ENCODE measurements at regions of chr2 and their contacts with region 1.

Region 1: GRCh38 chr2:21042958-21043743 is 722 bp downstream of the APOB start:
- DNase-seq: peak; percentile 68
- ATAC-seq: peak; percentile 73
- H3K4me3 Mint-ChIP-seq: no peak overlapping the region
- H3K27ac Mint-ChIP-seq: no peak overlapping the region
- H3K4me1 Mint-ChIP-seq: peaks cover 3% of the 10 kb centered on the region
- H3K27me3 Mint-ChIP-seq: peaks cover 14% of the 10 kb centered on the region
- CTCF ChIP-seq: peak; percentile 96

Region 2: DNA sequence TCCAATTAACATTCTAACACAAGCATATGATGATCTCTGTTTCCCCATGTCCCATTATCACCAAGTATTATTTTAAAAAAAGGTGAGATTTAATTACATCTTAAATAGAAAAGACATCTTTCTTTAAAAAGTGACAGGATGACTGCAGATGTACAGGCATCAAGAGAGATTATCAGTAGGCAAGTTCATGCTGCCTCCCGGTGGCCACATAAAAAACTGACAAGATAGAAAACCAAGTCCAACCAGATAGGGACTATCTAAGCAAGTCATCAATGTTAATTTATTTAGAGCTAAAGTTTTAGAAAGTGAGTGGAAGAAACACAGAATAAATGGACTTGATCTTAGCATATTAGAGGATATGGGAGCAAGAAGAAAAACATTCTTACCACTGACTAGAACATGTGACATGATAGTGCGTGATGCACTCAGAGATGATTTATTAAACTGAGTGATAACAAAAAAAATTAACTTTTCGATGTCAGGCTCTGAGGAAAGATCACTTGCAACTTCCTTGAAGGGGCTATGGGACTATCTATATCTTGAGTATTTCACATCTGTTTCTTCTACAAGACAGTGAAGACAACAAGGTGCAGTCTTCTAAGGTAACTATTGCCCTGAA is 75.3 kb after region 1 on chr2:
- CTCF ChIA-PET with region 1: interaction called, 7 read pairs
- POLR2A ChIA-PET with region 1: no interaction called
- intact Hi-C with region 1: loop called (anchors 2 kb)
- DNase-seq: peak; percentile 44
- ATAC-seq: no peak
- H3K4me3 Mint-ChIP-seq: no peak overlapping the region
- H3K27ac Mint-ChIP-seq: no peak overlapping the region
- H3K4me1 Mint-ChIP-seq: no peaks in the 10 kb centered on the region
- H3K27me3 Mint-ChIP-seq: peaks cover 3% of the 10 kb centered on the region
- CTCF ChIP-seq: peak; percentile 14

Region 3: DNA sequence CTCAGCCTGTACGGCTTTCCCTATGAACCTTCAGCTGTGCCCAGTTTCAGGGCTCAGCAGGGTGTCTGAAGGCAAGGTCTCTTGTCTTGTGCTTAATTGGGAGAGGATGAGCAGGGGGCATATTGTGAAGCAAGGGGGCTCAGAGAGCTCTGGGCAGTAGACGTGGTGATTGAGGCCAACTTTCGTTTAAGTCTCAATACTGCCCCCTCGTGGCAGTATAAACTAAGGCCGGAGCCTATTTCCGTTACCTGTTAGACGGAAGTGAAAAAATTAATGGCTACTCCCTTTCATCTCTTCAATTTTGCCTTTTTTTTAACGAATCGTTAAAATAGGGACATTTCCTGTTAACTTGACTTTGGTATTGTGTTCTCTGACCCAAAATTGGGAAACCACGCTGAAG is 274.0 kb after region 1 on chr2:
- CTCF ChIA-PET with region 1: interaction called, 16 read pairs
- POLR2A ChIA-PET with region 1: no interaction called
- intact Hi-C with region 1: loop called (anchors 2 kb)
- DNase-seq: peak; percentile 58
- ATAC-seq: no peak
- H3K4me3 Mint-ChIP-seq: no peak overlapping the region
- H3K27ac Mint-ChIP-seq: no peak overlapping the region
- H3K4me1 Mint-ChIP-seq: no peaks in the 10 kb centered on the region
- H3K27me3 Mint-ChIP-seq: no peaks in the 10 kb centered on the region
- CTCF ChIP-seq: peak; percentile 61